ENCODE measurements at regions of chr18 and their contacts with region 1.

Region 1: GRCh38 chr18:59823596-59824195 is 76.1 kb upstream of the PMAIP1 start:
- DNase-seq: peak in 6 of 10 donors; percentile 36 to 89 (median 62)

Region 2: GRCh38 chr18:59249205-59249774 is 574.4 kb before region 1 on chr18:
- intact Hi-C with region 1: loop called (anchors 5 kb)
- DNase-seq: peak in 3 of 10 donors; percentile 50 to 67 (median 53)

Region 3: GRCh38 chr18:59459369-59460079 is 364.2 kb before region 1 on chr18:
- intact Hi-C with region 1: loop called (anchors 1 kb)
- DNase-seq: no peak

Region 4: DNA sequence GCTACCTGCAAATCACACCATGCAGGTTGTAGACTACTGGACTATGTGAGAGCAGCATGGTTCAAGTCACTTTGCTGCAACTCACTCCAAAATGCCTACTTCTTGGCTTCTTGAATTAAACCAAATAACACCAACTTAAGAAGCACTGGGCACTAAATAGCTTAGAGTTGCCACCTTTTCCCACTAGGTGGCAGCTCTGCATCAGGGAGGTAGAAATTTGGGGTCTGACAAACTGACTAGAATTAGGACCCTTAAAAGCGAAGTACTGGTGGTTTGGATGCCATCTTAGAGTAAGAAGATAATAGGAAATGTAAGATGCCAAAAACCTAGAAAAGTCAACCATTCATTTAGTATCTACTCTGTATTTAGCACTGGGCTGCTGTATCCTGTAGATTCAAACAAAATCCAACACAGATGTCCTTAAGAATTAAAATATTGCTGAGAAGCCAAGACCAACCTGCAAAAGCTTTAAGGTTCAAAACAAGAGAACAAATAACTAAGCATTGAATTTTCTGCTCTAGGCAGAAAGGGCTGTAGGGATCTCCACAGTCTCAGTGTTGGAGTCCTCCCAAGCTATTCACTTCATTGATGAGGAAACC is 192.0 kb before region 1 on chr18:
- intact Hi-C with region 1: loop called (anchors 5 kb)
- DNase-seq: no peak

Region 5: DNA sequence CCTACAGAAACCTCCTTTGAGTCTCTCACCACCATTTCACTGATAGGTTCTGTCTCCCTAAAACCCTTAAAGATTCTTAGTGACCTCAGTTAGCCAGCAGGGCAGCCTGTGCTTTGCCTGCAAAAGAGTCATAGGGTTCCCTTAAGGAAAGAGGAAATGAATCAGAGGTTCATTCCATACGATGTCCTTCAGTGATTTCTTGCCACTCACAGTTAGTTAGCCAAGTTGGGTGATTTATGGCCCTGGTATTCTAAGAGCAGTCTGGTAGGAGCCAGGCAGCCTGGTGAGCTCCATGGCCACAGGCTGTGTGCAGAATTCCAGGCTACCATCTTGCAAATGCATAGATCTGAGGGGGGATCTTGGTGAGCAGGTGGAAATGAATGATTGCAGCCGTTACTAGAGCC is 107.7 kb before region 1 on chr18:
- intact Hi-C with region 1: no loop called
- DNase-seq: no peak

Measured in posterior cingulate gyrus (tissue), 11 donors.